Transverse colon (tissue), 4 donors: ENCODE measurements at regions of chr5 and their contacts with region 1.

Region 1: DNA sequence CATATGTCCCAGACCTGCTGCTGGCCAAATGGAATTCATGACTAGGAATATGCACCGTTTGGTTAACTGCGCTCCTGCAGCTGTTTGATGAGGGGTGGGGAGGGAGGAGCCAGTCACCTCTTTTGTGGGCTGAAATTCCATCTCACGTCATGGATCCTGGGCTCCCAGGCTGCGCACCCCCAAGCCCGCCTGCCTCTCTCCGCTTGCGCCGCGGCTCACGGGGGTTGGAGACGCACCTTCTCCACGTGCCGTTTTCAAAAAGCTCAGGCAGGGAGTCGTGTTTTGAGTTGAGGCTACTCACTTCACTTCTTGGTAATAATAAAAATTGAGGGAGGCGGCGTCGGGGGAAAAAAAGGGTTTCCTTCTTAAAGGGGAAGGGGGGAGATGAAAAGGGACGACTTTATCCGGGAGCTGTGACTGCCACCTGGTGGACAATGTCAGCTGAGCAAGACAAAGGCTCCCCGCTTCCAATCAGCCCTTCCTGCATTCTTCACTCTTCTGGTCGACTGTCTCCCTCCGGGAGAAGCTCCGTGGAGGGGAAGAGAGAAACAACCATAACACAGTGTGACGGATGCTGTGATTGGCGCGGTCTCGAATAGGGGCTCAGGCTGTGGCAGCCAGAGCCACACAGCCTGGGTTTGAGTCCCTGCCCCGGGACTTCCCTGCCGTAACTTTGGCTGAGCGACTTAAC is 15.9 kb upstream of the C5orf47 start:
- DNase-seq: peak; percentile 86
- H3K4me3 ChIP-seq: peak overlapping the region; percentile 10 to 48 (median 26)
- H3K27ac ChIP-seq: peak overlapping the region in 1 of 4 donors; percentile 19
- H3K4me1 ChIP-seq: peaks cover 4 to 10% (median 5%) of the 10 kb centered on the region in 4 donors
- H3K27me3 ChIP-seq: no peaks in the 10 kb centered on the region
- CTCF ChIP-seq: peak; percentile 88 to 95 (median 89)
- EP300 ChIP-seq: no peak
- POLR2A ChIP-seq: no peak

Region 2: GRCh38 chr5:173615884-173616576 is 357.0 kb before region 1 on chr5:
- in situ Hi-C with region 1: loop called in 3 of 4 experiments (anchors 5 to 10 kb)
- intact Hi-C with region 1: loop called (anchors 1 kb)
- DNase-seq: peak; percentile 70
- H3K4me3 ChIP-seq: peak overlapping the region; percentile 93 to 100 (median 96)
- H3K27ac ChIP-seq: peak overlapping the region; percentile 95 to 98 (median 96)
- H3K4me1 ChIP-seq: peaks cover 13 to 28% (median 20%) of the 10 kb centered on the region in 4 donors
- H3K27me3 ChIP-seq: no peaks in the 10 kb centered on the region
- CTCF ChIP-seq: peak; percentile 56 to 81 (median 70)
- EP300 ChIP-seq: no peak
- POLR2A ChIP-seq: no peak

Region 3: DNA sequence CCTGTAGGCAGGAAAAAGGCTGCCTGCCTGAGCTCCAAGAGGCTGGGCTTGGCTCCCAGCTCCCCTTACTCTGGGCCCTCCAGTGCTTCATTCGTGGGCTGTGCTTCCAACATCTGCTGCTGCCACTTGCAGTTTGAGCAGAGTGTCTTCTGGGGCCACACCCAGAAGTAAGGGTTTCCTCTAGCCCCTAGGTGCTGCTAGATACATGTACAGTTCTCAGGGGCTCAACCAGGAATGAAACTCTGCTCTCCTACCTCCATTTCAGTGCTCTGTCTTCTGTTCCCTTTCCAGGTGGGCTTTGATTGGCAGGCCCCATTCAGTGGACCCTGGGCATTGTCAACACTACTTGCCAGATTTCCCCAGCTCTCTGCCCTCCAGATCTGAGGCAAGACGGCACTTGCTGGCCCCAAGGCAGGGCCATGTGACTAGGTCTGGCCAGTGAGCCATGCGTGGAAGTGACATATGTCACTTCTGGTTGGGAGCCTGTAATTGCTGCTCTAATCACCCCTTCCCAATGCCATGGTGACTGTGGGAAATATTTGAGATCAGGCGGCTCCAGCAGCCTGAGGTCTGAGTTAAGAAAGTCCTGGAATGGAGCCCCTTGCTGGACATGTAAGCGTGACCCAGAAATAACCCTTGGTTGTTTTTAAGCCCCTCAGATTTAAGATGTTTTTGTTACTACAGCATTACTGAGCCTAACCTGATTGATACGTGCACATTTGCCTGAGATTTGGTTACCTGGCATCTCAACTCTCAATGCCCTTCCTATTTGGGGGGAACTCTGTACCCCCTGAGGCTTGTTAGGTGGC is 347.2 kb before region 1 on chr5:
- in situ Hi-C with region 1: loop called in 1 of 4 experiments (anchors 5 kb)
- intact Hi-C with region 1: loop called (anchors 1 kb)
- DNase-seq: no peak
- H3K4me3 ChIP-seq: no peak overlapping the region
- H3K27ac ChIP-seq: no peak overlapping the region
- H3K4me1 ChIP-seq: no peaks in the 10 kb centered on the region
- H3K27me3 ChIP-seq: no peaks in the 10 kb centered on the region
- CTCF ChIP-seq: no peak
- EP300 ChIP-seq: no peak
- POLR2A ChIP-seq: no peak

Region 4: DNA sequence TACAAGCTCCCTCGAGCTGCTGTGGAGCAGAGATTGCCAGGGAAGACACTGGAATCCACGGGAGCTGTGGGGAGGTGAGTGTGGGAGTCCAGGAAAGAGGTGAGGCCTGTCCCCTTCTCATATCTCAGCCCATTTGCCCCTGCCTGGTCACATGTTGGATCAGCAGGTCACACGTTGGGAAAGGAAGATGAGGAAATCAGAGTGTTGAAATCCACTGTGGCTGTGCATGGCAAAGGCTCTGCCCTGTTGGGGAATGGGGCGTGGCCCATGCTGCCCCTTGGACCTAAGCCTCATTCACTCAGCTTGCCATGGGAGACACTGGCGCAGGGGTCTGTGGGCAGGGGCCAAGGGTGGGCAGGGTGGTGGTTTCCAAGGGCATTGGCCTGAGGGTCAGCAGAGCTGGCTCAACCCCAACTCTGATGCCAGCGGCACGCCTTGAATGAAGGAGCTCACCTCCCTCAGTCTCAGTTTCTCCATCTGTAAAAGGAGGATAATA is 170.4 kb before region 1 on chr5:
- in situ Hi-C with region 1: no loop called
- intact Hi-C with region 1: no loop called
- DNase-seq: peak; percentile 80
- H3K4me3 ChIP-seq: no peak overlapping the region
- H3K27ac ChIP-seq: peak overlapping the region in 2 of 4 donors; percentile 8 to 49
- H3K4me1 ChIP-seq: peaks cover 0 to 10% (median 4%) of the 10 kb centered on the region in 4 donors
- H3K27me3 ChIP-seq: no peaks in the 10 kb centered on the region
- CTCF ChIP-seq: no peak
- EP300 ChIP-seq: no peak
- POLR2A ChIP-seq: no peak